H1 (cell line): ENCODE measurements at regions of chr4 and their contacts with region 1.

Region 1: DNA sequence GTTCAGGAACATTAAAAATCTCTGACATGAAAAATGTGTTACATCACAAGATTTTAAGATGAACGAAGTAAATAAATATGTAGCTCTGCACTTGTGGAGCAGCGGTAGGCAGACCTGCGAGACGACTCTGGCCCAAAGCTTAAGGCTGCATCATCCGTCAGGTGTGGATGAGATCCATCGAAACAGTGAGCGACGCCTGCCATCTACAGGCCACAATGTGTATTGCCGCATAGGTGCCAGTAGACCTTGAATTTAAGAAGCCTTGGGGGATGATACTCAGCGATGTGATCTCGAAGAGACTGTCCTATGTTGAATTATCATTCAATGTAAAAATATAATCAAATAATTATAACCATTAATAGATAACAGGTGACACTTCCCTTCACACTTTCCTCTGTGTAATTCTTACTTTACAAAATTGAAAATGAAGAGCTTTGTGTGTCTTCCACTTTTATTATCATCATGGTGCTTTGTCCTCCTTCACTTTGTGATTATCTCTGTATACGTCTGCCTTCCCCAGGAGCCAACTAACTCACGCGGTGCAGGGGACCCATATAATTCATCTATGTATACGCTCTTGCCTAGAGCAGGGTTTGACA is 851.0 kb downstream of the RAB28 start:
- DNase-seq: peak; percentile 87 to 93
- H3K4me3 ChIP-seq: no peak overlapping the region
- H3K27ac ChIP-seq: no peak overlapping the region
- H3K4me1 ChIP-seq: no peaks in the 10 kb centered on the region
- H3K27me3 ChIP-seq: no peaks in the 10 kb centered on the region
- CTCF ChIP-seq: peak; percentile 79 to 96 (median 81)
- EP300 ChIP-seq: no peak
- POLR2A ChIP-seq: no peak
- RAD21 ChIP-seq: peak; percentile 99

Region 2: DNA sequence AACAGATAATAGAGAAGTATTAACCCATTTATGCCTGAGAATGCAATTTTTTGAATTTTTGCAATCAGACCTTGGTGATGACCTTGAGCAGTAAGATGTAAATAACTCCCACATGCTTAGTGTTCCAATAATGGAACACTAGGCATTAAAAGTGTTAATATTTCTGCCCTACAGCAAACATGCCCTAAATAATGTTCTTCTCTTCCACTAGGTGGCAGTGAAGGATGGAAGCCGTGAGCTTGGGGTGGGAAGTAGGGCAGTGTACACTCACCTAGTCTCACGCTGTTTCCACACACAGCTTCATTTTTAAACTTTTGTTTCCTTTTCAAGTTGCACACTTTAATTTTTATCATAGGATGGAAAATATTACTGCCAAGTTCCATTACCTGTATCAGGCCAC is 591.3 kb before region 1 on chr4:
- CTCF ChIA-PET with region 1: interaction called, 17 read pairs
- POLR2A ChIA-PET with region 1: no interaction called
- DNase-seq: no peak
- H3K4me3 ChIP-seq: no peak overlapping the region
- H3K27ac ChIP-seq: no peak overlapping the region
- H3K4me1 ChIP-seq: no peaks in the 10 kb centered on the region
- H3K27me3 ChIP-seq: peaks cover 0 to 2% (median 0%) of the 10 kb centered on the region in 4 experiments; a peak in 1 of 7 replicates
- CTCF ChIP-seq: peak; percentile 42 to 66 (median 58)
- EP300 ChIP-seq: no peak
- POLR2A ChIP-seq: no peak
- RAD21 ChIP-seq: peak; percentile 84 to 85

Region 3: GRCh38 chr4:12446657-12447185 is 186.4 kb before region 1 on chr4:
- CTCF ChIA-PET with region 1: no interaction called
- POLR2A ChIA-PET with region 1: no interaction called
- DNase-seq: no peak
- H3K4me3 ChIP-seq: no peak overlapping the region
- H3K27ac ChIP-seq: no peak overlapping the region
- H3K4me1 ChIP-seq: no peaks in the 10 kb centered on the region
- H3K27me3 ChIP-seq: no peaks in the 10 kb centered on the region
- CTCF ChIP-seq: no peak
- EP300 ChIP-seq: no peak
- POLR2A ChIP-seq: no peak
- RAD21 ChIP-seq: no peak

Region 4: DNA sequence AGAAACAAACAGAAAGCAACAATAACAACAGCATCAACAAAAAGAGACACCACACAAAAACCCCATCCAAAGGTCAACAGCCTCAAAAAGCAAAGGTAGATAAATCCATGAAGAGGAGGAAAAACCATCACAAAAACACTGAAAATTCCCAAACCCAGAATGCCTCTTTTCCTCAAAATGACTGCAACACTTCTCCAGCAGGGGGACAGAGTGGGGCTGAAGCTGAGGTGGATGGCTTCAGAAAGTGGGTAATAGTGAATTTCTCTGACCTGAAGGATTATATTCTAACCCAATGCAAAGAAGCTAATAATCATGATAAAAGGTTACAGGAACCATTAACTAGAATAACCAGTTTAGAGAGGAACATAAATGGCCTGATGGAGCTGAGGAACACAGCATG is 37.2 kb before region 1 on chr4:
- CTCF ChIA-PET with region 1: interaction called, 45 read pairs
- POLR2A ChIA-PET with region 1: no interaction called
- DNase-seq: no peak
- H3K4me3 ChIP-seq: no peak overlapping the region
- H3K27ac ChIP-seq: no peak overlapping the region
- H3K4me1 ChIP-seq: no peaks in the 10 kb centered on the region
- H3K27me3 ChIP-seq: no peaks in the 10 kb centered on the region
- CTCF ChIP-seq: peak; percentile 53 to 68 (median 61)
- EP300 ChIP-seq: no peak
- POLR2A ChIP-seq: no peak
- RAD21 ChIP-seq: peak; percentile 57 to 63

Region 5: DNA sequence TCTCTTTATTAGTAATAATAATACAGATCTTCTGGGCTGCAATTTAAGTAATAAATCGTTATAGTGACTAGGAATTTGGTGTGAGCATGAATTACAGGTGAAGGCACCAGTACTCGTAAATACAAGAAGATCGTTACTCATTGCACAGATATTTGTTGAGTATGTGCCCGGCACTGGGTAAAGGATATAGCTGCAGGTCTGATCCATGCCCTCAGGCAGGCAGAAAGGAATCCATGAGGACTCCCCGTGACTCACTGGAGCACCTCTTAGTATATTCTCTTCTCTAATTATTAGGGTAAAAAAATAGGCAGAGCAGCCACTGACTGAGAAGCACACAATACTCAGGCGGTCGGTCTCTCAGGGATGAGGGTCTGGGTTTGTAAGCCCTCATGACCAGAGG is 17.3 kb before region 1 on chr4:
- CTCF ChIA-PET with region 1: interaction called, 25 read pairs
- POLR2A ChIA-PET with region 1: no interaction called
- DNase-seq: no peak
- H3K4me3 ChIP-seq: no peak overlapping the region
- H3K27ac ChIP-seq: no peak overlapping the region
- H3K4me1 ChIP-seq: peaks cover 0 to 7% (median 1%) of the 10 kb centered on the region in 4 experiments; a peak in 1 of 7 replicates
- H3K27me3 ChIP-seq: no peaks in the 10 kb centered on the region
- CTCF ChIP-seq: no peak
- EP300 ChIP-seq: no peak
- POLR2A ChIP-seq: no peak
- RAD21 ChIP-seq: no peak

Region 6: DNA sequence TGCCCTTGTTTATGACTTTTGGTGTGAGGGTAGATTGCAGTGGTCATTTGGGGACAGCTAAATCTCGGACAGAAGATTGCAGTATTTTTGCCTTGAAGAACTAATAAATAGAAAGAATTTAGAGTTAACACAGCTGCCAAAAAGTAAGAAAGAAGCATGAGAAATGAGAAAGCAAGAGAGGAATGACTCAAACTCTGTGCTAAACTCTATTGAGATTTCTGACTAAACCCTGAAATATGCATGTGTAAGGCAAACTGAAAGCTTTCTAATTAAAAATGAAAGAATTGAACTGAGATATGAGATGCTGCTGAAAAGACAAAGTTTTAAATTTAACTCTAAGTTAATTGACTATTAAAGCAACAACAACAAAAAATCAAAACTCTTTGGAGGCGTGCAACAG is 59.7 kb after region 1 on chr4:
- CTCF ChIA-PET with region 1: no interaction called
- POLR2A ChIA-PET with region 1: no interaction called
- DNase-seq: no peak
- H3K4me3 ChIP-seq: no peak overlapping the region
- H3K27ac ChIP-seq: no peak overlapping the region
- H3K4me1 ChIP-seq: no peaks in the 10 kb centered on the region
- H3K27me3 ChIP-seq: no peaks in the 10 kb centered on the region
- CTCF ChIP-seq: no peak
- EP300 ChIP-seq: no peak
- POLR2A ChIP-seq: no peak
- RAD21 ChIP-seq: no peak

Region 7: GRCh38 chr4:12778706-12779105 is 145.6 kb after region 1 on chr4:
- CTCF ChIA-PET with region 1: no interaction called
- POLR2A ChIA-PET with region 1: no interaction called
- DNase-seq: no peak
- H3K4me3 ChIP-seq: no peak overlapping the region
- H3K27ac ChIP-seq: no peak overlapping the region
- H3K4me1 ChIP-seq: no peaks in the 10 kb centered on the region
- H3K27me3 ChIP-seq: no peaks in the 10 kb centered on the region
- CTCF ChIP-seq: no peak
- EP300 ChIP-seq: no peak
- POLR2A ChIP-seq: no peak
- RAD21 ChIP-seq: no peak